ENCODE measurements at regions of chr1 and their contacts with region 1.

Region 1: GRCh38 chr1:108708691-108709660 is 3.7 kb upstream of the FNDC7 start:
- DNase-seq: peak; percentile 78
- ATAC-seq: peak; percentile 86
- H3K4me3 Mint-ChIP-seq: no peak overlapping the region
- H3K27ac Mint-ChIP-seq: no peak overlapping the region
- H3K4me1 Mint-ChIP-seq: peaks cover 25% of the 10 kb centered on the region
- H3K27me3 Mint-ChIP-seq: no peaks in the 10 kb centered on the region

Region 2: GRCh38 chr1:108670131-108670773 is 38.7 kb before region 1 on chr1:
- CTCF ChIA-PET with region 1: no interaction called
- POLR2A ChIA-PET with region 1: no interaction called
- intact Hi-C with region 1: no loop called
- DNase-seq: no peak
- ATAC-seq: peak; percentile 20
- H3K4me3 Mint-ChIP-seq: no peak overlapping the region
- H3K27ac Mint-ChIP-seq: peak overlapping the region; percentile 39
- H3K4me1 Mint-ChIP-seq: peaks cover 14% of the 10 kb centered on the region
- H3K27me3 Mint-ChIP-seq: peaks cover 2% of the 10 kb centered on the region

Region 3: GRCh38 chr1:108732398-108732797 is 23.4 kb after region 1 on chr1:
- CTCF ChIA-PET with region 1: interaction called, 3 read pairs
- POLR2A ChIA-PET with region 1: no interaction called
- intact Hi-C with region 1: loop called in 1 of 2 experiments (anchors 1 kb)
- DNase-seq: no peak
- ATAC-seq: no peak
- H3K4me3 Mint-ChIP-seq: no peak overlapping the region
- H3K27ac Mint-ChIP-seq: no peak overlapping the region
- H3K4me1 Mint-ChIP-seq: no peaks in the 10 kb centered on the region
- H3K27me3 Mint-ChIP-seq: no peaks in the 10 kb centered on the region